Activated T-helper 1 cell treated with anti-CD3 and anti-CD28 coated beads, Interleukin-12 subunit alpha, Interleukin-12 subunit beta, Interleukin-2, Interleukin-4 antibody, amounts not matched to agents 30 ng/mL and 10 ng/mL and 1 ng/mL, durations not matched to agents 14 hours and 24 hours and 36 hours (primary cell): ENCODE measurements at regions of chr10 and their contacts with region 1.

Region 1: DNA sequence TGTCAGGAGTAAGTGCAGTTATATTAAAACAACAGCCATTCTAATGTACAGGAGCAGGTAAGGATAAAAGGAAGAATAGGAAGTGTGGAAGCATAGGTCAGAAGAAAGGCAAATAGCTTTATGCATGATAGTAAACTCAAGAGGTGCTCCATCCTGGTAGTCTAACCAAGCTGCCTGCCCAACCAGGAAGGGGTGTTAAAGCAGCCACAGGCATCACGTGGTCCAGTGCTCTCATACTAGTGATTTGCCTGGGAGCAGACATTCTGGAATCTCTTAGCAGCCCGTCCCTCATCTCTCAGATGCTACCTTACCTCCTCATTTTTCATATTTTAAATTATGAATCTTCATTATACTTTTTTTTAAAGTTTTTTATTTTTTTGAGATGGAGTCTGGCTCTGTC is 18.5 kb downstream of the ABRAXAS2 start:
- DNase-seq: no peak
- H3K4me3 Mint-ChIP-seq: no peak overlapping the region
- H3K27ac Mint-ChIP-seq: no peak overlapping the region
- H3K4me1 Mint-ChIP-seq: no peaks in the 10 kb centered on the region
- H3K27me3 Mint-ChIP-seq: no peaks in the 10 kb centered on the region

Region 2: GRCh38 chr10:124197371-124198124 is 622.6 kb before region 1 on chr10:
- intact Hi-C with region 1: no loop called
- DNase-seq: no peak
- H3K4me3 Mint-ChIP-seq: no peak overlapping the region
- H3K27ac Mint-ChIP-seq: no peak overlapping the region
- H3K4me1 Mint-ChIP-seq: no peaks in the 10 kb centered on the region
- H3K27me3 Mint-ChIP-seq: peaks cover 11% of the 10 kb centered on the region

Region 3: DNA sequence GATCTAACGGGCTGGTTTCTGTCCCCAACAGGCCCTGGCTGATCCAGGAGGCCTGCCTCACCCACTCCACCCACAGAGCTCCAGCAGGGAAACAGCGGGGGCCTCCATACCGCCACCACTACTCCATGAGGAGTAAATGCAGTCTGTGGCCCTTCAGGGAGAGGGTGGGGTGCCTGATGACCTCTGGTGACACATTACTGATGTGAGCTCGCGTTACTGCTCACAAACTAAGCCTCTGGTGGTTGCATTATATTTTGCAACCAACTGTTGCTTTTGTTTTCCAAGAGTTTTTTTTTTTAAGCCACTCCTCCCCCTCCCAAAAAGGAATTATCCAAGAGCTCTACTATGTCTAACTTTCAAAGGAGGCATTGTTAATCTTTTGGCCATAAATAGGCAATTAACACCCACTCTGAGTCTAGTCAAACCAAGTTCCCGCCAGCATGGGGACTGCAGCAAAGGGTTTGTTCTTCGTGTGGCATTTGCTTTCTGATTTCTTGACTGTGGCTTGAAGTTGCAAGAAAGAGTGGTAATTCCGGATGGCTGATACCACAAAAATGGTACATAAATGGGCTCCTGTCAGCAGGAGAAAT is 148.5 kb before region 1 on chr10:
- intact Hi-C with region 1: loop called (anchors 1 kb)
- DNase-seq: no peak
- H3K4me3 Mint-ChIP-seq: no peak overlapping the region
- H3K27ac Mint-ChIP-seq: no peak overlapping the region
- H3K4me1 Mint-ChIP-seq: peaks cover 40% of the 10 kb centered on the region
- H3K27me3 Mint-ChIP-seq: peaks cover 2% of the 10 kb centered on the region

Region 4: DNA sequence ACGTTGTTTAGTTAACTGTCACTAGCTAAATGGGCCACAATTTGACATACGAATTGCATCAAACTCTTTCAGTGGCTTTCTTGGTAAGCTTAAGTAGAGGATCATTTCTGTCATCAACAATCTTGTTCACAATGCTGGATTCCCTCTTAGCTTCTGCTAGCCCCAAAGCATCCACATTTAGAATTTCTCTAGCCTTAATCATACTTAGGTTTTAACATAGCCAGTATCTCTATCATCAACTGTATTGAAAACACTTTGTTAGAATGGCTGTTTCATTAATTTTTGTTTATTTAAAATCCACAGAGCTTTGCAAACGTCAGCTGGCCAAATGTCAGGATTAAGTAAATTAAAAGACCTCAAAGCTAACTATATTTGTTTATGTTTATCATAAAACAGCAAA is 22.6 kb after region 1 on chr10:
- intact Hi-C with region 1: no loop called
- DNase-seq: no peak
- H3K4me3 Mint-ChIP-seq: no peak overlapping the region
- H3K27ac Mint-ChIP-seq: no peak overlapping the region
- H3K4me1 Mint-ChIP-seq: no peaks in the 10 kb centered on the region
- H3K27me3 Mint-ChIP-seq: no peaks in the 10 kb centered on the region

Region 5: DNA sequence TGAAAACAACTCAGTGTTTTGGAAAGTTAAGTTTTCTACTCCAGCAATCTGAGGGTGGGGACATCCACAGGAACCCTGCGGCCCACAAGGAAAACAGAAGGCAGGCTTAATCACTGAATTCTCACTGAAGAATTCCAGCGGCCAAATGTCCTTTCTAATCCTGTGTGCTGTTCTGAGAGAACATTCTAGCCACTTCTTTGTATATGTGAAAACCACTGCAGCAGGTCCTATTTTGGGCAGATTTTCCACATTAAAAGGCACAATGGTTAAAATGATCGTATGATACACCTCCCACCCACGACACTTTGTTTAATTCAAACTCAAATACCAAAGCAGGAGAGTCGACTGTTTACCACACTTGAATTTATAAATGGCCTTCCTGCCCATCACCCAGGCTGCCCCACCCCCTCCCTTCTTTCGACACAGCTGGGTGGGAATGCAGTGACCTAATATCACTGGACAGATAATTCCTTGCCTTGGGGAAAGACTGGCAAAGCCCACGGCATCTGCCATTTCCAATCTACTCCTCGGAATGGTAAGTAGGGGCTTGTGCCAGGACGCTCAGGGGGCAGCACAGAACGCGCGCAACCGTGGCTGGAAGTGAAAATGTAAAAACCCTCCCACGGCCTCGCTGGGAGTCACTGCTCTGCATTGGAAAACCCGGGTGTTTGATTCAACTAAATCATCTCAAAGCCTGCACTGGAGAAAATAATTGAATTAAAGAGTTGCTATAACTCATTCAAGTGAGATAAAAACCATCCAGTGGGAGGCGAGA is 273.3 kb after region 1 on chr10:
- intact Hi-C with region 1: no loop called
- DNase-seq: no peak
- H3K4me3 Mint-ChIP-seq: no peak overlapping the region
- H3K27ac Mint-ChIP-seq: no peak overlapping the region
- H3K4me1 Mint-ChIP-seq: no peaks in the 10 kb centered on the region
- H3K27me3 Mint-ChIP-seq: no peaks in the 10 kb centered on the region